AG04449 (cell line): ENCODE measurements at regions of chr3 and their contacts with region 1.

Region 1: GRCh38 chr3:196684548-196685407 is 27.3 kb downstream of the CEP19 start:
- DNase-seq: no peak
- H3K4me3 ChIP-seq: no peak overlapping the region
- CTCF ChIP-seq: peak; percentile 66

Region 2: DNA sequence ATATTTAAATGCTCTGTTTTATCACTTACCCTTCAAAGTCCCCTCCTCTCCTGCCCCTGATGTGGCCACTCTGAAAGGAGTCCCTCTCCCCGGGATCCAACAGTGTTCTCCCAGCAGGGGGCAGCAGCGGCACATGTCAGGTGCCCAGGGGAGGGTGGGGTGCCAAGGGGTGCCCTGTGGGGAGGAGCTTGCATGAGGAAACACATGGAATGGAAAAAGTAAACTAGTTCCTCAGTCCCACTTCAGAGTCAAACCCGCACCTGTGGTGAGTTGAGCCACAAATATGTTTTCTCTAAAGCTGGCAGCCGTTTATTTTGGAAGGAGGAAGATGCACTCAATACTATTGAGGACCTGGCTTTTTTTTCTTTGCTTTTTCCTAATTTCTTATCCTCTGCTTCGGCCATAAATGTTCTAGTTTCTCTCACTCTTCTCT is 75.4 kb before region 1 on chr3:
- CTCF ChIA-PET with region 1: interaction called, 421 read pairs
- POLR2A ChIA-PET with region 1: no interaction called
- DNase-seq: no peak
- H3K4me3 ChIP-seq: no peak overlapping the region
- CTCF ChIP-seq: peak; percentile 92

Region 3: GRCh38 chr3:196654735-196655090 is 30.1 kb before region 1 on chr3:
- CTCF ChIA-PET with region 1: interaction called, 10 read pairs
- POLR2A ChIA-PET with region 1: no interaction called
- DNase-seq: no peak
- H3K4me3 ChIP-seq: no peak overlapping the region
- CTCF ChIP-seq: no peak

Region 4: DNA sequence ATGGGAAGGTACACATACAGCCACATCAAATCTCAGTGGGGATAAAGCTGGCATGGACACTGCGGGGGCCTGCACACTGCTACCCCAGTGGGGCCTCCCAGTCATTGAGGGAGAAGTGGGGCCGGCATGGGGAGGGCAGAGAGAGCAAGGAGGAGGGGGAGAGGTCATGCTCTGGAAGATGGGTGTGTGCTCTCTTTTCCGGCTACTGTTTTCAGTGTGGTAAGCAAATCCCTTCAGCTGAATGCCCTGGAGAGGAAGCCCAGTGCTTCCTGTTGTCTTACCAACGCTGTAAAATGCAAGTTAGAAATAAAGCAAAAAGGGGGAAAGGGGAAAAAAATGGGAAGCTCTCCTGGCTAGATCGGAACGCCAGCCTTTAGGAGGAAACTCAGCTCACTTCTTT is 14.4 kb before region 1 on chr3:
- CTCF ChIA-PET with region 1: interaction called, 22 read pairs
- POLR2A ChIA-PET with region 1: no interaction called
- DNase-seq: no peak
- H3K4me3 ChIP-seq: no peak overlapping the region
- CTCF ChIP-seq: no peak

Region 5: GRCh38 chr3:196821806-196822355 is 137.1 kb after region 1 on chr3:
- CTCF ChIA-PET with region 1: no interaction called
- POLR2A ChIA-PET with region 1: no interaction called
- DNase-seq: no peak
- H3K4me3 ChIP-seq: no peak overlapping the region
- CTCF ChIP-seq: no peak

Region 6: GRCh38 chr3:197010556-197011351 is 326.0 kb after region 1 on chr3:
- CTCF ChIA-PET with region 1: no interaction called
- POLR2A ChIA-PET with region 1: no interaction called
- DNase-seq: no peak
- H3K4me3 ChIP-seq: no peak overlapping the region
- CTCF ChIP-seq: no peak